ENCODE measurements at regions of chr15 and their contacts with region 1.

Region 1: GRCh38 chr15:28123408-28124023 is 24.4 kb upstream of the OCA2 start:
- DNase-seq: peak; percentile 44 to 51
- ATAC-seq: peak in 7 of 8 donors; percentile 29 to 61 (median 55)
- H3K4me3 ChIP-seq: no peak overlapping the region
- H3K27ac ChIP-seq: no peak overlapping the region
- H3K4me1 ChIP-seq: peaks cover 0 to 11% (median 4%) of the 10 kb centered on the region in 9 donors
- H3K27me3 ChIP-seq: no peaks in the 10 kb centered on the region
- CTCF ChIP-seq: peak; percentile 24 to 73 (median 68)

Region 2: DNA sequence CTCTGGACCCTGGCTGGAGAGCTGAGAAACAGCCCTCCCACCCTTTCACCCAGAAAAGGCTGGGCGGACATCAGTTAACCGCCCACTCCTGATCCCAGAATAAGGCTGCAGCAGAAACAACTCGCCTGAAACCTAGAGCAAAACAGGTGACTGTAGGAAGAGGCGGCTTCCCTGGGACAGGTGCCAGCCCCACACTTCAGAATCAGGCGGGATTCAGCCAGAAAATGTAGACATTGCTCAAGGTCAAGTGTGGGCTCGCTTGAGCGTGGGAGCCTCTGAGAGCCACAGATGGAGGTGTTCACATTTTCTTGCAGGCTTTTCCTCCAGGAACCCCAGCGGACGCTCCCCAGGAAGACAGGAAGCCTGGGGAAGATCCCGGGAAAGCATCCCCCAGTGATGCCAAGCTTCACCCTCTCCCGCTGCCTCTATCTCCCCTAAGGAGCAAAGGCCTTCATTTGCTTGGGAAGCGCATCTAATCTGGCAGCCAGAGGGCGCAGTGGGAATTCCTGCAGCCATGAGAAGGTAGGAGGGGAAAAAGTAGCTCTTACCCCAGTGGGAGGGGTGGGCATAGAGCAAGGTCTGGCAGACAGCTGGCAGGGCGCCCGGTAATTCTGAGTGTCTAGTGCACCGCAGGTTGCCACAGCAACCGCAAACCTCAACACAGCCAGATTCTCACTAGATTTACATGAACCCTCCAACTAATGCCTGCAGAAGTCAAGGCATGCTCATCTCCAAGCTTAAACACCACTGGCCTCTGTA is 102.1 kb before region 1 on chr15:
- intact Hi-C with region 1: loop called in 2 of 10 experiments (anchors 5 kb)
- DNase-seq: peak in 1 of 2 donors; percentile 34
- ATAC-seq: peak in 7 of 8 donors; percentile 13 to 68 (median 50)
- H3K4me3 ChIP-seq: no peak overlapping the region
- H3K27ac ChIP-seq: no peak overlapping the region
- H3K4me1 ChIP-seq: no peaks in the 10 kb centered on the region
- H3K27me3 ChIP-seq: no peaks in the 10 kb centered on the region
- CTCF ChIP-seq: peak; percentile 27 to 64 (median 52)

Region 3: GRCh38 chr15:28086175-28086703 is 37.3 kb before region 1 on chr15:
- intact Hi-C with region 1: loop called in 4 of 10 experiments (anchors 1 to 5 kb)
- DNase-seq: peak in 1 of 2 donors; percentile 42
- ATAC-seq: peak; percentile 86 to 97 (median 94)
- H3K4me3 ChIP-seq: no peak overlapping the region
- H3K27ac ChIP-seq: no peak overlapping the region
- H3K4me1 ChIP-seq: peaks cover 0 to 9% (median 4%) of the 10 kb centered on the region in 9 donors
- H3K27me3 ChIP-seq: peaks cover 0 to 12% (median 0%) of the 10 kb centered on the region in 7 donors
- CTCF ChIP-seq: peak; percentile 48 to 82 (median 70)

Measured in heart right ventricle (tissue), 16 donors.